MCF 10A (cell line): ENCODE measurements at regions of chr1 and their contacts with region 1.

Region 1: DNA sequence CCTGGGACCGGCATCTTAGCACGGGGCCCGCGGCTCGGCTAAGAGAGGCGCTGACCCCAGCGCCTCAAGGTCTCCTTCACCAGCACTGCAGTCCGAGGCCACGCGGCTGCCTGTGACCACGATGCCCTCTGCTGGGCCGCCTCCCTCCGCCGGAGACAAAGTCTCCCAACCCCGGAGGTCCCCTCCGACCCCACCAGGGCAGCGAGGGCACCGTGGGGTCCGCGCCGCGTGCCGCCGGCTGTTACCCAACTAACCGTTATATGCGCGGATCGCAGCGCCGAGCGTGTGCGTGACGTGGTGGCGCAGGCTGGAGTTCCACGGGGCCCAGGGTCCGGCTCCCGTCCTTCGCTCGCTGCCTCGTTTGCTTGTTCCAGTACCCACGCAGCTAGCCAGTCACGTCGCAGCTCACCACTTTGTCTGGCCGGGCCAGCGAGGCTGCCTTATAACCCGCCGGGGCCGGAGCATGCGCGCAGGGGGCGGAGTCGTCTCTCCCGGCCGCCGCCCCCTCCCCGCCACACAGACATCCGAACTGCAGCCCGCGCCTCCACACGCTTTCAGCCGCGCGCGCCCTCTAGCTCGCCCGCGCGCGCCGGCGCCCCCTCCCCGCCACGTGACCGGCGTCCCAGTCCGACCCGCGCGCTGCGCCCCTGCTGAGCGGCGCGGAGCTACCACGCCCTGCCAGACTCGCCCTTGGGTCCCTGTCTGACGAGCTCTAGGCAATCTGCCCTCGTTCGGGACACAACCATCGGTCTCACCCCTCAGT is at the start of gene SLC16A1:
- DNase-seq: peak; percentile 93
- H3K4me3 Mint-ChIP-seq: peak within 1 kb of the TSS; percentile 78
- H3K27ac Mint-ChIP-seq: peak within 1 kb of the TSS; percentile 91
- H3K4me1 Mint-ChIP-seq: peaks cover 48% of the 10 kb centered on the region
- H3K27me3 Mint-ChIP-seq: no peaks in the 10 kb centered on the region
- CTCF ChIP-seq: peak; percentile 15
- total RNA-seq, gene SLC16A1: 142 and 148 TPM in 2 replicates

Region 2: GRCh38 chr1:112882271-112882744 is 73.7 kb before region 1 on chr1:
- CTCF ChIA-PET with region 1: interaction called, 25 read pairs
- POLR2A ChIA-PET with region 1: interaction called, 33 read pairs
- intact Hi-C with region 1: loop called (anchors 1 kb)
- DNase-seq: no peak
- H3K4me3 Mint-ChIP-seq: no peak overlapping the region
- H3K27ac Mint-ChIP-seq: peak overlapping the region; percentile 43
- H3K4me1 Mint-ChIP-seq: peaks cover 20% of the 10 kb centered on the region
- H3K27me3 Mint-ChIP-seq: no peaks in the 10 kb centered on the region
- CTCF ChIP-seq: no peak

Region 3: DNA sequence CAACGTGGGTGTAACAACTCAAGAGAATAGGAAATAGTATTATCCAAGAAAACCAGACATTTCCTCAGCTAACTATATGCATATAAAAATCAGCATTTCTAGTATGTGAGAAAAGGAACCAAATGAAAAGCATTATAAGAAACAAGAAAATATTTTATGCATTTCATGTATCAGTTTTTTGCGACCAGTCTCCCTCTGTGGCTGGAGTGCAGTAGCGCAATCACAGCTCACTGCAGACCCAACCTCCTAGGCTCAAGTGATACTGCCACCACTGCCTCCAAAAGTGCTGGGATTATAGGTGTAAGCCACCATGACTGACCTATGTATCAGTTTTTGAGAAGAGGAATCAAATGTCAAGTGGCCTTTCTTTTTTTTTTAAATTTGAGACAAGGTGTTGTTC is 30.9 kb before region 1 on chr1:
- CTCF ChIA-PET with region 1: interaction called, 5 read pairs
- POLR2A ChIA-PET with region 1: interaction called, 15 read pairs
- intact Hi-C with region 1: no loop called
- DNase-seq: no peak
- H3K4me3 Mint-ChIP-seq: no peak overlapping the region
- H3K27ac Mint-ChIP-seq: peak overlapping the region; percentile 36
- H3K4me1 Mint-ChIP-seq: peaks cover 9% of the 10 kb centered on the region
- H3K27me3 Mint-ChIP-seq: no peaks in the 10 kb centered on the region
- CTCF ChIP-seq: no peak

Region 4: GRCh38 chr1:112991402-112992120 is 35.6 kb after region 1 on chr1:
- CTCF ChIA-PET with region 1: interaction called, 5 read pairs
- POLR2A ChIA-PET with region 1: interaction called, 7 read pairs
- intact Hi-C with region 1: loop called (anchors 5 kb)
- DNase-seq: peak; percentile 73
- H3K4me3 Mint-ChIP-seq: no peak overlapping the region
- H3K27ac Mint-ChIP-seq: no peak overlapping the region
- H3K4me1 Mint-ChIP-seq: peaks cover 27% of the 10 kb centered on the region
- H3K27me3 Mint-ChIP-seq: no peaks in the 10 kb centered on the region
- CTCF ChIP-seq: no peak

Region 5: DNA sequence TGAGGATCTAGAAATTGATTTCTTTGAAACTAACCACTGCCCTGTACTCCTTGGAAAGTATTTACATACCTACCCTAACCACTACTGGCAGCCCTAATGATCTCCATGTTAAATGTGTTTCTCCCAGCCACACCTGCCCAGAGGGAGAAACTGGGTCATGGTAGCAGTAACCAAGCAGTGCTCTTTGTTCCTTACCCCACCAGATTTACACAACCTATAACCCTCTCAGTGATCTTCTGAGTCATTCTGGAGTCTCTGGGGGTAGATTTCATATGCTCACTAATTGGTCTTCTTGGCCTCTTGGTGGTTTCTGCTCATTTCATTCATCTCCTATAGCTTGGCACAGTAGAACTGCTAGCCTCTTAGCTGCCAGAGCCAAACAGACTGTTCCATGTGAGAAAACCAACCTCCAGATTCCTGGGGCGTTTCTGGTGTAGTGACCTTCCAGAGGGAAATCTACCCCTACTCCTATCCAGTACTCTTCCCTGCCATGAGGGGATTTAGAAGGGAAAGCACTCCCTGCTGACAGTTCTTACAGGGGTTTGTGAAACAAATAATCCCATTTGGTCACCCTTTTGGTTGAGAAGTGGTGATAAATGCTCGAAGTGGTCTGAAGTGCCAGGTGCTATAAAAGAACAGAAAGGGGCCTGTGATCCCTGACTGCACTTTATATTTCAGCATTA is 80.8 kb after region 1 on chr1:
- CTCF ChIA-PET with region 1: interaction called, 4 read pairs
- POLR2A ChIA-PET with region 1: interaction called, 13 read pairs
- intact Hi-C with region 1: loop called (anchors 2 kb)
- DNase-seq: peak; percentile 70
- H3K4me3 Mint-ChIP-seq: no peak overlapping the region
- H3K27ac Mint-ChIP-seq: peak overlapping the region; percentile 46
- H3K4me1 Mint-ChIP-seq: peaks cover 7% of the 10 kb centered on the region
- H3K27me3 Mint-ChIP-seq: no peaks in the 10 kb centered on the region
- CTCF ChIP-seq: no peak

Region 6: GRCh38 chr1:113434081-113434873 is 478.3 kb after region 1 on chr1:
- CTCF ChIA-PET with region 1: no interaction called
- POLR2A ChIA-PET with region 1: no interaction called
- intact Hi-C with region 1: no loop called
- DNase-seq: no peak
- H3K4me3 Mint-ChIP-seq: no peak overlapping the region
- H3K27ac Mint-ChIP-seq: no peak overlapping the region
- H3K4me1 Mint-ChIP-seq: peaks cover 16% of the 10 kb centered on the region
- H3K27me3 Mint-ChIP-seq: no peaks in the 10 kb centered on the region
- CTCF ChIP-seq: no peak